CD8-positive, alpha-beta T cell (primary cell): ENCODE measurements at regions of chrX and their contacts with region 1.

Region 1: DNA sequence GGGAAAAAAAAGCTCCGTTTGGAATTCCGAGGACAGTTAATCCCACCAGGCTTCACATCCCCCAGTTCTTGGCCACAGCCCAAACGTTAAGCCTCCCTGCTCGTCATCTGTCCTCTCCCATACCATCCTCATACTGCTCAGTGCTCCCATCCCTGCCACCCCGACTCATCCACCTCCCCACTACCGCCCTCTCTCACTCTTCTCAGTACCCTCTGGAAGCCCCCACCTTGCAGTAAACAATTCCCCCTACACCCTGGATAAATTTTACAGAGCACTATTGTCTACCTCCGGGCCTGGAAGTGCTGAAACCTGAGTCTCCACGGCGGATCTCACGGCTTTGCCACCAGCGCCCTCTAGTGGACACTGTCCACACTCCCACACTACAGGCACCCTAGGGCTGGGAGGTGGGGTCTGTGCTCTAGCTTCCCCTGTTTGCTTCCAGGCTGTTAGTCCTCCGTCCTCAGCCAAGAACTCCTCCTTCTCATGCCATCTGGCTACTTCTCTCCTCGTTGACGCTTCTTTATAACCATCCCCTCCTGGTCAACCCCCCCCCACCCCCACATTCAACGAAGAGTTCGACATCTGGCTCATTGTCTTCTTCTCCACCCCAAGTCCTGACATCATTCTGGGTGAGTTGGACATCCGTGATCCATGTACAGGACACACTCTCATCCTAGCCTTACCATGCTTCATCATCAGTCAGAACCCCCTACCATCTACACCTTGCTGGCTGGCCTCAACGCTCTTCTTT is 54.5 kb downstream of the RTL9 start:
- DNase-seq: peak; percentile 37 to 77 (median 62)
- ATAC-seq: peak; percentile 80
- H3K4me3 ChIP-seq: no peak overlapping the region
- H3K4me3 Mint-ChIP-seq: no peak overlapping the region
- H3K27ac ChIP-seq: no peak overlapping the region
- H3K27ac Mint-ChIP-seq: no peak overlapping the region
- H3K4me1 ChIP-seq: no peaks in the 10 kb centered on the region
- H3K4me1 Mint-ChIP-seq: no peaks in the 10 kb centered on the region
- H3K27me3 ChIP-seq: no peaks in the 10 kb centered on the region
- H3K27me3 Mint-ChIP-seq: no peaks in the 10 kb centered on the region
- CTCF ChIP-seq: peak; percentile 57

Region 2: GRCh38 chrX:110167952-110168451 is 245.1 kb before region 1 on chrX:
- CTCF ChIA-PET with region 1: interaction called, 457 read pairs
- POLR2A ChIA-PET with region 1: interaction called, 3 read pairs
- intact Hi-C with region 1: no loop called
- DNase-seq: peak; percentile 5 to 72 (median 45)
- ATAC-seq: peak; percentile 56
- H3K4me3 ChIP-seq: no peak overlapping the region
- H3K4me3 Mint-ChIP-seq: no peak overlapping the region
- H3K27ac ChIP-seq: no peak overlapping the region
- H3K27ac Mint-ChIP-seq: no peak overlapping the region
- H3K4me1 ChIP-seq: no peaks in the 10 kb centered on the region
- H3K4me1 Mint-ChIP-seq: peaks cover 7% of the 10 kb centered on the region
- H3K27me3 ChIP-seq: no peaks in the 10 kb centered on the region
- H3K27me3 Mint-ChIP-seq: no peaks in the 10 kb centered on the region
- CTCF ChIP-seq: peak; percentile 38

Region 3: DNA sequence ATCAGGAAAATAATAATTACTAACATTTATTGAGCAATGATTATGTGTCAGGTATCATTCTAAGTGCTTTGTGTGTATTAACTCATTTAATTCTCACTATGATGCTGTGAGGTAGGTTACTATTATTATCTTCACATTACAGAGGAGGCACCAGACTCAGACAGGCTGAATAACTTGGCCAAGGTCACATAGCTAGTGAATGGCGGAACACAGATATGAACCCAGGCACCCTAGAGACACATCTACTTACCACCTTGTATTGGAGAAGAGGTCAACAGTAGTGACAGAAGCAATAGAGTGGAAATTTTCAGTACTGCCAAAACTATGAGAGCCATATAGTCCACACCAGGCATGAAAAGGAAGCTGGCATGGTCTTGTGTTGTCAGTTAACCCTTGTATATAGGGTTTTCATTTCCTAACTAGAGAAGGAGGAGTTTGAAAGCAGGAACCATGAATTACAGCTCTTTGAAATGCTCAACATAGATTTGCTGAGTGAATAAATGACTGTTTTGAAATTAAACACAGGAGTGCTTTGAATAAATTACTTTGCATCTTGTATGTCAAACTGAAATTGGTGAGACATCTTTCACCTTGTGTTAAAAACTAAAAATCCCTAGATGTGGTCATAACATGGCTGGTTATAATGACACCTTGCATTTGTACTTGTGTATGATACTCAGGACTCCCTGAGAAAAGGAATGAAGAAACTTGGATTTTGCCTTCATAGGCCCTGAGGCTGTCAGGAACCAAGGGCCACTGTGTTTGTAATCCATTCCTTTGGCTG is 17.3 kb after region 1 on chrX:
- CTCF ChIA-PET with region 1: no interaction called
- POLR2A ChIA-PET with region 1: no interaction called
- intact Hi-C with region 1: no loop called
- DNase-seq: no peak
- ATAC-seq: no peak
- H3K4me3 ChIP-seq: no peak overlapping the region
- H3K4me3 Mint-ChIP-seq: no peak overlapping the region
- H3K27ac ChIP-seq: no peak overlapping the region
- H3K27ac Mint-ChIP-seq: no peak overlapping the region
- H3K4me1 ChIP-seq: no peaks in the 10 kb centered on the region
- H3K4me1 Mint-ChIP-seq: no peaks in the 10 kb centered on the region
- H3K27me3 ChIP-seq: no peaks in the 10 kb centered on the region
- H3K27me3 Mint-ChIP-seq: peaks cover 4% of the 10 kb centered on the region
- CTCF ChIP-seq: no peak

Region 4: DNA sequence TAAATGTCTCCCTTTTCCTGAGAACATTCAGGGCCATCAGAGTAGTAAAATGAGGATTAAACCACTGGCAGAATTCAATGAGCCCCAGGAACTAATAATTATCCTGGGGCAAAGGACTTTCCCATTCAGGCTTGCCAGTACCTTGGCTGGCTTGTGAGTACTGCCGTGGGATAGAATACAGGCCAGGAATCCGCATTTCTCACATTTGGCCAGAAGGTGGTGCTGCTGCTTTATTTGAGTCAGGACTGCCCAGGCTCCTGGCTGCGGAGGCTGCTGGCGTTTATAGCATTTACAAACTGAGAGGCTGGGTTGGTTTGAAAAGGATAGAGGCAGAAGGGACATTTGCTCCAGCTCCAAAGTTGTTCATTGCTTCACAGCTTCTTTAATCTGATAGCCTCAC is 36.9 kb after region 1 on chrX:
- CTCF ChIA-PET with region 1: no interaction called
- POLR2A ChIA-PET with region 1: no interaction called
- intact Hi-C with region 1: no loop called
- DNase-seq: peak; percentile 0 to 66 (median 44)
- ATAC-seq: peak; percentile 49
- H3K4me3 ChIP-seq: no peak overlapping the region
- H3K4me3 Mint-ChIP-seq: no peak overlapping the region
- H3K27ac ChIP-seq: no peak overlapping the region
- H3K27ac Mint-ChIP-seq: no peak overlapping the region
- H3K4me1 ChIP-seq: no peaks in the 10 kb centered on the region
- H3K4me1 Mint-ChIP-seq: no peaks in the 10 kb centered on the region
- H3K27me3 ChIP-seq: no peaks in the 10 kb centered on the region
- H3K27me3 Mint-ChIP-seq: peaks cover 4% of the 10 kb centered on the region
- CTCF ChIP-seq: peak; percentile 43